GM13977 (cell line): ENCODE measurements at regions of chr10 and their contacts with region 1.

Region 1: GRCh38 chr10:62594093-62594520 is 210.4 kb upstream of the ADO start:
- DNase-seq: peak; percentile 45
- CTCF ChIP-seq: peak; percentile 98

Region 2: DNA sequence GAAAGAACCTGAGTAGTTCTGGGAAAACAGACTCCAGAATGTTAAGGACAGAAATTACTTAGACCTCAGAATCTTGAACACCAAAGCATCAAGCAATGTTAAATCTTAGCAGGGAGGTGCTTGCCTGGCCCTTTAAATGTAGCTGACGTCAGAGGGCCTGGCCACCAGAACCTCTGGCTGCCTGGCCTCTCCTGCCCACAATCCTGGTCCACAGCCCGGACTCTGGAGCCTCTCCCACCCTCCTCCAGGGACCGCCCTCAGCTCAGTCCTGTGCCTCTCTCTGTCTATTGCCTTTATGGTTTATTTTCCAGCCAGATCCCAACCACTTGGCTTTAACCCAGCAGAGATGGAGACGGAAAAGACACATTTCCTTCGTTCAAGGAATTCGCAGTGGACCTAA is 264.3 kb after region 1 on chr10:
- in situ Hi-C with region 1: no loop called
- DNase-seq: no peak
- CTCF ChIP-seq: no peak

Region 3: GRCh38 chr10:63157845-63158624 is 563.9 kb after region 1 on chr10:
- in situ Hi-C with region 1: loop called (anchors 10 kb)
- DNase-seq: peak; percentile 57
- CTCF ChIP-seq: peak; percentile 75